Activated CD4-positive, alpha-beta memory T cell treated with anti-CD3 and anti-CD28 coated beads for 36 hours (primary cell): ENCODE measurements at regions of chr7 and their contacts with region 1.

Region 1: GRCh38 chr7:22640269-22640668 is 86.7 kb upstream of the IL6 start:
- DNase-seq: peak; percentile 78
- H3K4me3 Mint-ChIP-seq: no peak overlapping the region
- H3K27ac Mint-ChIP-seq: no peak overlapping the region
- H3K4me1 Mint-ChIP-seq: peaks cover 20% of the 10 kb centered on the region
- H3K27me3 Mint-ChIP-seq: peaks cover 26% of the 10 kb centered on the region

Region 2: GRCh38 chr7:22586786-22587140 is 53.5 kb before region 1 on chr7:
- CTCF ChIA-PET with region 1: no interaction called
- POLR2A ChIA-PET with region 1: no interaction called
- intact Hi-C with region 1: loop called (anchors 1 kb)
- DNase-seq: no peak
- H3K4me3 Mint-ChIP-seq: no peak overlapping the region
- H3K27ac Mint-ChIP-seq: no peak overlapping the region
- H3K4me1 Mint-ChIP-seq: peaks cover 16% of the 10 kb centered on the region
- H3K27me3 Mint-ChIP-seq: peaks cover 21% of the 10 kb centered on the region

Region 3: GRCh38 chr7:22660732-22661131 is 20.5 kb after region 1 on chr7:
- CTCF ChIA-PET with region 1: interaction called, 3 read pairs
- POLR2A ChIA-PET with region 1: interaction called, 7 read pairs
- intact Hi-C with region 1: loop called (anchors 1 kb)
- DNase-seq: no peak
- H3K4me3 Mint-ChIP-seq: no peak overlapping the region
- H3K27ac Mint-ChIP-seq: no peak overlapping the region
- H3K4me1 Mint-ChIP-seq: peaks cover 26% of the 10 kb centered on the region
- H3K27me3 Mint-ChIP-seq: peaks cover 15% of the 10 kb centered on the region

Region 4: GRCh38 chr7:22675917-22676343 is 35.7 kb after region 1 on chr7:
- CTCF ChIA-PET with region 1: interaction called, 17 read pairs
- POLR2A ChIA-PET with region 1: interaction called, 3 read pairs
- intact Hi-C with region 1: loop called (anchors 1 kb)
- DNase-seq: peak; percentile 61
- H3K4me3 Mint-ChIP-seq: no peak overlapping the region
- H3K27ac Mint-ChIP-seq: peak overlapping the region; percentile 47
- H3K4me1 Mint-ChIP-seq: peaks cover 75% of the 10 kb centered on the region
- H3K27me3 Mint-ChIP-seq: no peaks in the 10 kb centered on the region

Region 5: DNA sequence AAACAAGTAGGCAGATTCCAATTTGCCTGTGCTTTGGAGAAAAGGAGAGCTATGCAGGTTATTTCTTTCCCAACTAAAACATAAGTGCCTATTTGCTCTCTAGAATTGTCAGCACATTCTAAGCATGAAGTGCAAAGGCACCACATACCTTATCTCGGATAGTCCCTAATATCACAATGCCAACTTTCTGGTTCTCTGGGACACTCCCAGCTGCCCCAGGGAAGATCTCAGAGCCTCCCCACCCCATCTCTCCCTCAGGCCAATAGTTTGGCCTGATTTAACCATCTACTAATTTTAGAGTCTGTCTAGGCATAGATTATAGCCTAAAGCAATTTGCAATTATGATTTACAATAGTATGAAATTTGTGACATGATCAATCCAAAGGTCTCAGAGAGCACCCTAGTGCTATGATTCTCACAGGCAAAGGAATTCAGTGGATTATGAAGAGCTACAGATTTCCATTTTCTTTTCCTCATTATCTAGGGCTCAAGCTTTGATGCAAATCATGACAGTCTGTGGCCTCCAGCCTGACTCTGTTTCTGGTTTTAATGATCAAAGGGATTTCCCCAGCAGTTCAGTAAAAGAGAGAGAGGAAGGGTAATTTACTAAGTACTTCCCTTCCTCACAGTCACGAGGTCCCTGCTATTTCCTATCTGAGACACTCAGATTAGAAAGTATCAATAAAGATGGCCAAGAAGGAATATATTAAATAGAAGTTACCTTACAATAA is 57.8 kb after region 1 on chr7:
- CTCF ChIA-PET with region 1: interaction called, 5 read pairs
- POLR2A ChIA-PET with region 1: interaction called, 3 read pairs
- intact Hi-C with region 1: loop called (anchors 1 kb)
- DNase-seq: peak; percentile 36
- H3K4me3 Mint-ChIP-seq: peak overlapping the region; percentile 13
- H3K27ac Mint-ChIP-seq: peak overlapping the region; percentile 85
- H3K4me1 Mint-ChIP-seq: peaks cover 66% of the 10 kb centered on the region
- H3K27me3 Mint-ChIP-seq: peaks cover 2% of the 10 kb centered on the region